Activated CD4-positive, alpha-beta T cell treated with anti-CD3 and anti-CD28 coated beads for 36 hours (primary cell): ENCODE measurements at regions of chr17 and their contacts with region 1.

Region 1: DNA sequence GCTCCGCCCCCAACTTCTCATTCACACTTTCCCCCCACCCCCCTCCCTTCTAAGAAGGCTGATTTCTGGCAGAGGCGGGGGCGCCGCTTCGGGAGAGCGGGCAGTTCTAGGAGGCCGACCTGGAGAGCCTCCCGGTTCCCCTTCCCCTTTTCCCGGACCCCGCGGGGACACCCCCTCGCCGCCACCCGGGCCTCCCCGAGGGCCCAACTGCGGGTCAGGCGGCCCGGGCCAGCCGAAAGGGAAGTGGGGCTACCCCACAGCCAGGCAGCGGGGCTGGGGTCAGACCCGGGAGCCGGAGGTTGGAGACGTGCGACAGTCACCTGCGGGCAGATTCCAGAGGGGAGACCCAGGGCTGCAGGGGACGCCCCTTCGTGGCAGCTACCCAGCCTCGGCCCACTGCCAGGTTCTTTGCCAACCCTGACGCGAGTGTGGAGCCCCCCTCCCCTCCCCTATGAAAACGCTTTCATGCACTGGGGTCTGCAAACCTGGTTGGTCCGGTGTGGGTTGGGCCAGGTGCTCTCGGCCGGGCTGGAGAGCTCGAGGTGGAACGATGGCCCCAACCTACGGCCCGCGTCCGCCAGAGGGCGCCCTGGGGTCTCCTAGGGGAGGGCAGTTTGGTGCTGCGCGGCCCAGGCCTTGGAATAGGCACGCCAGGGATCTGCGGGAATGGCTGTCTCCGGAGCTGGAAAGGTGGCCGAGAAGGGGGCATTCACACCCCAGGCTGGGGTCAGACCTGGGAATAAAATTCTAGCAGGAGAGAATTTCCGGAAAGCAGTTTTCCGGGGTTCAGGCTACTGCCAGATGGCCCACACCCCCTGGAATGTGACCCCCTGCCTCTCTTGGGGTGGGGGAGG is 721 bp upstream of the SOCS3 start:
- DNase-seq: peak; percentile 97
- ATAC-seq: peak; percentile 41
- H3K4me3 Mint-ChIP-seq: peak overlapping the region; percentile 74
- H3K27ac Mint-ChIP-seq: peak overlapping the region; percentile 90
- H3K4me1 Mint-ChIP-seq: peaks cover 42% of the 10 kb centered on the region
- H3K27me3 Mint-ChIP-seq: peaks cover 3% of the 10 kb centered on the region

Region 2: GRCh38 chr17:78186692-78187595 is 173.7 kb before region 1 on chr17 and contains the starts of genes AFMID and TK1:
- CTCF ChIA-PET with region 1: no interaction called
- POLR2A ChIA-PET with region 1: interaction called, 3 read pairs
- intact Hi-C with region 1: loop called in 1 of 2 experiments (anchors 2 kb)
- DNase-seq: peak; percentile 98
- ATAC-seq: peak; percentile 96
- H3K4me3 Mint-ChIP-seq: peak within 1 kb of the TSS; percentile 78
- H3K27ac Mint-ChIP-seq: peak within 1 kb of the TSS; percentile 73
- H3K4me1 Mint-ChIP-seq: peaks cover 26% of the 10 kb centered on the region
- H3K27me3 Mint-ChIP-seq: no peaks in the 10 kb centered on the region
- total RNA-seq, gene AFMID: 26.3 to 26.7 TPM
- total RNA-seq, gene TK1: 157 to 195 TPM

Region 3: DNA sequence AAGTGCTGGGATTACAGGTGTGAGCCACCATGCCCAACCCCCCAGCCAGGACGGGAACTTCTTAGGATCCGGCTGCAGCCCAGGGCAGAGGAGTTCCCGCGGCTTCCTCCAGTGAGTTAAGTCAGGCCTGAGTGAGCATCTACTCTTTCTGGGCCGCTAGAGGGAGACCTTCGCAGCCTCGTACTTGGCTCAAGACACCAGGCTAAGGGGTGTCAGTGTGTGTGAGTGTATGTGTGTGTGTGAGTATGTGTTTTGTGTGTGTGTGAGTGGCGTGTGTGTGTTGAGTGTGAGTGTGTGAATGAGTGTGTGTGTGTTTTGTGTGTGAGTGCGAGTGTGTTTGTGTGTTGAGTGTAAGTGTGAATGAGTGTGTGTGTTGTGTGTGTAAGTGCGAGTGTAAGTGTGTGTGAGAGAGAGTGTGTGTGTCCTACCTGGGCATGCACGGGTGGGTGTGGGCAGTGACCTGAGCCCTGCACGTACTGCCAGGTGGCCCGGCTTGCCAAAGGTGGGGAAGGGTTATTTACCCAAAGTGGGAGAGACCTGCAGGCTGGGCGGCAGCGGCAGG is 70.7 kb before region 1 on chr17:
- CTCF ChIA-PET with region 1: interaction called, 3 read pairs
- POLR2A ChIA-PET with region 1: no interaction called
- intact Hi-C with region 1: loop called (anchors 1 to 2 kb)
- DNase-seq: peak; percentile 86
- ATAC-seq: peak; percentile 100
- H3K4me3 Mint-ChIP-seq: no peak overlapping the region
- H3K27ac Mint-ChIP-seq: no peak overlapping the region
- H3K4me1 Mint-ChIP-seq: peaks cover 6% of the 10 kb centered on the region
- H3K27me3 Mint-ChIP-seq: no peaks in the 10 kb centered on the region

Region 4: GRCh38 chr17:78378225-78379130 is 17.9 kb after region 1 on chr17 and contains the start of gene PGS1:
- CTCF ChIA-PET with region 1: interaction called, 5 read pairs
- POLR2A ChIA-PET with region 1: interaction called, 64 read pairs
- intact Hi-C with region 1: loop called (anchors 1 kb)
- DNase-seq: peak; percentile 91
- ATAC-seq: peak; percentile 9
- H3K4me3 Mint-ChIP-seq: peak within 1 kb of the TSS; percentile 88
- H3K27ac Mint-ChIP-seq: peak within 1 kb of the TSS; percentile 94
- H3K4me1 Mint-ChIP-seq: peaks cover 62% of the 10 kb centered on the region
- H3K27me3 Mint-ChIP-seq: no peaks in the 10 kb centered on the region
- total RNA-seq, gene PGS1: 73.3 to 75.0 TPM

Region 5: DNA sequence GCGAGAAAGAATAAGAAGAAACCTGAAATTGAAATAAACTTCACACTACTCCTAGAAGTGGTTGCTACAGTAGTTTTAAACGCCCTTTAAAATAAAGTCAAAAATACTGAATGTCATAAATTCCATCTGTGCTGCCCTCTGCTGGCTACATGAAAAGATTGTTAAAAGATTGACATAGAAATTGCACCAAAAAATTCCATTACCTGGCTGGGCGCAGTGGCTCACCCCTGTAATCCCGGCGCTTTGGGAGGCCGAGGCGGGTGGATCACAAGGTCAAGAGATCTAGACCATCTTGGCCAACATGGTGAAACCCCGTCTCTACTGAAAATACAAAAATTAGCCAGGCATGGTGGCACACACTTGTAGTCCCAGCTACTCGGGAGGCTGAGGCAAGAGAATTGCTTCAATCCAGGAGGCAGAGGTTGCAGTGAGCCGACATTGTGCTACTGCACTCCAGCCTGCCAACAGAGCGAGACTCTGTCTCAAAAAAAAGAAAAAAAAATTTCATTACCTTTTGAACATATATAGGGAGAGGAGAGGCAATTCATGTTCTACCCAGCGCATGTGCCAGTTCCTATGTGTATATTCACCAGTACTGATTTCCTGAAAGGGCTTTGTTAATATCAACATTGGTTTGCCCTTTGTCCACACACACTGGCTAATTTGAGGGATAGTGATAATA is 384.9 kb after region 1 on chr17:
- CTCF ChIA-PET with region 1: no interaction called
- POLR2A ChIA-PET with region 1: interaction called, 4 read pairs
- intact Hi-C with region 1: loop called in 1 of 2 experiments (anchors 1 kb)
- DNase-seq: peak; percentile 71
- ATAC-seq: no peak
- H3K4me3 Mint-ChIP-seq: peak overlapping the region; percentile 7
- H3K27ac Mint-ChIP-seq: peak overlapping the region; percentile 94
- H3K4me1 Mint-ChIP-seq: peaks cover 94% of the 10 kb centered on the region
- H3K27me3 Mint-ChIP-seq: no peaks in the 10 kb centered on the region